ENCODE measurements at regions of chr16 and their contacts with region 1.

Region 1: DNA sequence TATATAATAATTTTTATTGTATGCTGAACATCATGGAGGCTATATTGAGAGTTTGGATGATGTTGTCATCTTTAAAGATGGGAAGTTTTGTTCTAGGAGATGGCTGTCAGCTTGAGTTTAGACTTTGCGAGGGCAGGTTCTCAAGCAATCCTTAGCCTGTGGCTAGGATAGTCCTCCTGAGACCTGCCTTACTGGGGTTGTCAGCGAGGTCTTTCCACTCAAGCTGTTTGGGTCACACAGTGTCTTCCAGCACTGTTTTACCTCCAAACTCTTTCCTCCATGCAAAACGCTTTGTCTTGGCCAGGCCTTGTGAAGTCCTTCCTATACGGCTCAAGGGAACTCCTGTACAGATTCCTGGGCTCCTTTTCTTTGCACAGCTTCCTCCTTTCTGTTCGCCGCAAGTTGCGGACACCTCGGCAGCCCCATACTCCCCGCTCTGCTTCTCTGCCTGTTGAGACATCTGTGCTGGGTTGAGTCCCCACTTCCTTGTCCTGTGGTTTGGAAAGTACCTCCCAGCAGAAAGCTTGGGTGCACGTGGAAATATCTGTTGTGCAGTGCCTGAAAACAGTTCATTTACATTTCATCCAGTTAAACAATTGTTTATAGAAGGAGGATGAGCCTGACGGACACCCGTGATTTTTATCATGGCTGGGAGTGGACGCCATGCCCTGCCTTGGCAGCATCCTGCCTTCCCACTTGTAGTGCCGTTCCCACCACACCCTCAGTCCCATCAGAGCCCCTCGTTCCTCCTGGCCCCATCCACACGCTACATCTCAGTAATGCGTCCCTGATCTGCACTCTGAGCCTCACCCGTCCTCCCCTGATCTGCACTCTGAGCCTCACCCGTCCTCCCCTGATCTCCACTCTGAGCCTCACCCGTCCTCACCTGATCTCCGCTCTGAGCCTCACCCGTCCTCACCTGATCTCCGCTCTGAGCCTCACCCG is 55.0 kb upstream of the CBFA2T3 start:
- DNase-seq: peak; percentile 91
- ATAC-seq: peak; percentile 98
- H3K4me3 ChIP-seq: peak overlapping the region; percentile 6 to 51 (median 25)
- H3K4me3 Mint-ChIP-seq: peak overlapping the region; percentile 56
- H3K27ac ChIP-seq: peak overlapping the region; percentile 35 to 68
- H3K27ac Mint-ChIP-seq: peak overlapping the region; percentile 69
- H3K4me1 ChIP-seq: peaks cover 19 to 26% of the 10 kb centered on the region in 2 donors
- H3K4me1 Mint-ChIP-seq: peaks cover 35% of the 10 kb centered on the region
- H3K27me3 ChIP-seq: no peaks in the 10 kb centered on the region
- H3K27me3 Mint-ChIP-seq: no peaks in the 10 kb centered on the region
- CTCF ChIP-seq: no peak

Region 2: DNA sequence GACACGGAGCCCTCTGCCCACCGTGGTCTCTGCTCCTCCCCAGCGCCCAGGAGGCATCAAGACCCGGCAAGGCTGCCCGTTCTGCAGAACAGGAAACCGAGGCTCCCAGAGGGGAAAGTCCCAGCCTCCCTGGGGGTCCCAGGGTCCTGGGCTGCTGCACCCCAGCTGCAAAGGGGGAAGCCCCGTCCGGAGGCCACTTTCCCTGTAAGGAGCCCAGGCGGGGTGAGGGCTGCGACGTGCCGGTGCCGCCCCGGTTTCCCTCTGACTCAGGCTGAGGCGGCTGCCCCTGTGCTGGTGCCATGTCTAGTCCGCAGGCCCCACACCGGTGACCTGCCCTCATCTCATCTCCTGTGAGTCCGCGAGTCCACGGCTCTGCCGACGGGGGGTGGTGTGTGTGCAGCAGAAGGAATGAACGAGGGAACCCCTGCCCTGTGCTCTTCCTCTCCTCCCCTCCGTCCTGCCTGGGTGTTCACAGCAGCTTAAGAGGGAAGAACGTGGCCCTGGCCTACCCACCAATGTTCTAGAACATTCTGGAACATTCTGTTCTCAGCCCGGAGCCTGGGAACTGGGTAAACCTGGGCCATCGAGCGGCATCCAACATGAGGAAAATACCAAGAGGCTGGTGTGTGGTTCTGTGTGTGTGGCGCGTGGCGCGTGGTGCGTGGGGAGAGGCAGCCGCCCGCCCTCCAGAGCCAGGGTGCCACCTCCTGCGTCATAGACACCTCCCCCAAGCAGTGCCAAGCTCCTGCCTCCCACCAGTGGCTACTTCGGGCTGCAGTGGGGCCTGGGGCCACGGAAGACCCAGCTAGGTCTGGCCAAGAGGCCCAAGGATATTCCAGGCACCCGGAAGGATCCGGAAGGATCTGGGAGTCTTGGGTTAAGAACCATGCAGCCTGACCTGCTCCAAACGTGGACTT is 48.0 kb before region 1 on chr16:
- CTCF ChIA-PET with region 1: no interaction called
- POLR2A ChIA-PET with region 1: interaction called, 6 read pairs
- intact Hi-C with region 1: loop called (anchors 1 kb)
- DNase-seq: peak; percentile 73
- ATAC-seq: peak; percentile 77
- H3K4me3 ChIP-seq: peak overlapping the region in 4 of 5 experiments; percentile 11 to 47 (median 28)
- H3K4me3 Mint-ChIP-seq: peak overlapping the region; percentile 84
- H3K27ac ChIP-seq: peak overlapping the region; percentile 28 to 59
- H3K27ac Mint-ChIP-seq: peak overlapping the region; percentile 90
- H3K4me1 ChIP-seq: peaks cover 63 to 67% of the 10 kb centered on the region in 2 donors
- H3K4me1 Mint-ChIP-seq: peaks cover 65% of the 10 kb centered on the region
- H3K27me3 ChIP-seq: no peaks in the 10 kb centered on the region
- H3K27me3 Mint-ChIP-seq: no peaks in the 10 kb centered on the region
- CTCF ChIP-seq: no peak

Region 3: DNA sequence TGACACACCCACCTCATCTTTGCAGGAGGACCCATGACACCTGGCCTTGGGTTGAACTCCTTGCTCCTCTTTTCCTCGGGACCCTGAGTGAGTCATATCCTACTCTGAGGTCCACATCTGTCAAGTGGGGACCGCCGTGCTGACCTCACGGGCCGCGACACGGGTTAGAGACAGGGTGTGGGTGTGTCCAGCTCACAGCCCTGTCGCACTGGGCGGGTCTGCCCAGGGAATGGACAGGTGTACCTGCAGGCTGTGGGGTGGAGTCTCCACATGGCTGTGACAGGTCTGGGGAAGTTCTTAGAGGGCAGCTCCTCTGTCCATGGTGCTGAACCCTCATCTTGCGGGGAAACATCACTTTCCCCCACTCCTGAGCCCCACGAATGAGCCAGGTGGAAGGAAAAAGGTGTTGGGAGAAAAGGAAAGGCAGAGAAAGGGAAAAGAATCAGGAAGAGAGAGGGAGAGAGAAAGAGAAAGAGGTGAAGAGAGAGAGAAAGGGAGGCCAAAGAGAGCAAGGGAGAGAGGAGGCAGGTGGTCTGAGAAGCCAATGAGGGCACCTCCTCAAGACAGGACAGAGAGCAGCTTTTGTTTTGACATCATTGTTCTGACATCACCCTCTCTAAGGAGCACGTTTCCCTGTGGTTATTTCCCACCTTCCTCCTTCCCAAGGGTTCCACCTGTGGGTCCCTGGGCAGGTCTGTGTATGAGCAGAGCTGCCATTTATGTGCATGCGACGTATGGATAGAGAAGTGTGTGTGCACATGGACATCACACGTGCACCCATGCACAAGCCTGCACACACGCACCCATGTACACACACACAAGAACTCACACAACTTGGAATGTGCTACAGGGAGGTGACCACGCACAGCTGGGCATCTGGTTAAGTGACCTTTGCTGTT is 22.4 kb before region 1 on chr16:
- CTCF ChIA-PET with region 1: no interaction called
- POLR2A ChIA-PET with region 1: no interaction called
- intact Hi-C with region 1: no loop called
- DNase-seq: peak; percentile 74
- ATAC-seq: peak; percentile 41
- H3K4me3 ChIP-seq: no peak overlapping the region
- H3K4me3 Mint-ChIP-seq: no peak overlapping the region
- H3K27ac ChIP-seq: no peak overlapping the region
- H3K27ac Mint-ChIP-seq: peak overlapping the region; percentile 29
- H3K4me1 ChIP-seq: peaks cover 4 to 5% of the 10 kb centered on the region in 2 donors
- H3K4me1 Mint-ChIP-seq: peaks cover 5% of the 10 kb centered on the region
- H3K27me3 ChIP-seq: peaks cover 0 to 48% (median 8%) of the 10 kb centered on the region in 4 experiments
- H3K27me3 Mint-ChIP-seq: peaks cover 33% of the 10 kb centered on the region
- CTCF ChIP-seq: no peak

Region 4: GRCh38 chr16:89060207-89060794 is 28.3 kb after region 1 on chr16:
- CTCF ChIA-PET with region 1: no interaction called
- POLR2A ChIA-PET with region 1: interaction called, 11 read pairs
- intact Hi-C with region 1: no loop called
- DNase-seq: peak; percentile 87
- ATAC-seq: peak; percentile 80
- H3K4me3 ChIP-seq: no peak overlapping the region
- H3K4me3 Mint-ChIP-seq: peak overlapping the region; percentile 63
- H3K27ac ChIP-seq: peak overlapping the region; percentile 51 to 74
- H3K27ac Mint-ChIP-seq: peak overlapping the region; percentile 90
- H3K4me1 ChIP-seq: peaks cover 27 to 56% of the 10 kb centered on the region in 2 donors
- H3K4me1 Mint-ChIP-seq: peaks cover 43% of the 10 kb centered on the region
- H3K27me3 ChIP-seq: peaks cover 0 to 4% (median 0%) of the 10 kb centered on the region in 4 experiments
- H3K27me3 Mint-ChIP-seq: no peaks in the 10 kb centered on the region
- CTCF ChIP-seq: no peak

Measured in B cell (primary cell).